Panc1 (cell line): ENCODE measurements at regions of chr11 and their contacts with region 1.

Region 1: GRCh38 chr11:11659567-11660362 is 38.0 kb upstream of the GALNT18 start:
- DNase-seq: no peak
- ATAC-seq: 0 out of 2 replicates have a peak, but pooled peaks have one; percentile 60
- H3K4me3 ChIP-seq: no peak overlapping the region
- H3K27ac ChIP-seq: no peak overlapping the region
- H3K4me1 ChIP-seq: no peaks in the 10 kb centered on the region
- H3K27me3 ChIP-seq: peaks cover 13% of the 10 kb centered on the region
- CTCF ChIP-seq: peak; percentile 59

Region 2: GRCh38 chr11:11510939-11511338 is 148.8 kb before region 1 on chr11:
- CTCF ChIA-PET with region 1: no interaction called
- POLR2A ChIA-PET with region 1: no interaction called
- in situ Hi-C with region 1: no loop called
- intact Hi-C with region 1: no loop called
- DNase-seq: no peak
- ATAC-seq: no peak
- H3K4me3 ChIP-seq: no peak overlapping the region
- H3K27ac ChIP-seq: no peak overlapping the region
- H3K4me1 ChIP-seq: no peaks in the 10 kb centered on the region
- H3K27me3 ChIP-seq: no peaks in the 10 kb centered on the region
- CTCF ChIP-seq: no peak

Region 3: GRCh38 chr11:11555208-11555607 is 104.6 kb before region 1 on chr11:
- CTCF ChIA-PET with region 1: no interaction called
- POLR2A ChIA-PET with region 1: no interaction called
- in situ Hi-C with region 1: no loop called
- intact Hi-C with region 1: no loop called
- DNase-seq: no peak
- ATAC-seq: no peak
- H3K4me3 ChIP-seq: no peak overlapping the region
- H3K27ac ChIP-seq: no peak overlapping the region
- H3K4me1 ChIP-seq: no peaks in the 10 kb centered on the region
- H3K27me3 ChIP-seq: no peaks in the 10 kb centered on the region
- CTCF ChIP-seq: no peak

Region 4: GRCh38 chr11:12066056-12066798 is 406.5 kb after region 1 on chr11:
- CTCF ChIA-PET with region 1: no interaction called
- POLR2A ChIA-PET with region 1: interaction called, 13 read pairs
- in situ Hi-C with region 1: no loop called
- intact Hi-C with region 1: no loop called
- DNase-seq: peak; percentile 91
- ATAC-seq: peak; percentile 86
- H3K4me3 ChIP-seq: no peak overlapping the region
- H3K27ac ChIP-seq: peak overlapping the region; percentile 86
- H3K4me1 ChIP-seq: peaks cover 25% of the 10 kb centered on the region
- H3K27me3 ChIP-seq: no peaks in the 10 kb centered on the region
- CTCF ChIP-seq: no peak